HCT116 (cell line): ENCODE measurements at regions of chr5 and their contacts with region 1.

Region 1: DNA sequence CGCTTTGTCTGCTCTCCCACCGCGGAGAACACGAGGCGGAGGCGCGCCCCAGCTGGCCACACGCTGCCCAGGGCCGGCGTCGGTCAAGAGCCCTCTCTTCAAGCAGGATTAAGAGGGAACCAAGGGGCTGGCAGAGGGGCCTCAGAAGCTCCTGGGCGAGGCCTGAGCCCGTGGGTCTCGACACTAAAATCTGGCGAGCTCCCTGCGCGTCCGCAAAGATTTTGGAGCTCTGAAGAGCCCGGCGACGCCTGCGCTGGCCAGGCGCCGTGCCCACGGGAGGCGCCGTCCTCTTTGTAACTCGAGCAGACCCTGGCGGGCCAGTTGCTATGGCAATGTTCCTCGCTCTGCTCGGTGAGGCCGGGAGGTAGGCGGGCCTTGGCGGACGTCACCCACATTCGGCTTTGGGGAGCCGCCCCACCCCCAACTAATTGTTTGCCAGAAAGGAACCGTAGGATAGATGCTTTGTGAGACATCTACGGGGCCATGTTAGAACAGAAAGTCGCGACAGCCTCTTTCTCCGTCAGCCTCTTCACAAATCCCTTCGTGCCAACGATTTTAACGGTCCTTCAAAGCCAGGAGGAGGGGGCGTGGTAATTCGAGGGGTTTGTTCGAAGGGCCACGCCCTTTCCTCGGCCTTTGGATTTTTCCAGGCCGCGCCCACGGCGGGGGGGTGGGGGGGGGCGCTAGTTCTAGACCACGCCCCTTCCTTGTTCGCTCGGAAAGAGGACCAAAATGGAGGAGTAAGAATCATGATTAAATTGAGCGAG is 714 bp upstream of the CNOT8 start:
- DNase-seq: peak; percentile 92
- ATAC-seq: peak; percentile 81
- H3K4me3 ChIP-seq: peak overlapping the region; percentile 76 to 95
- H3K27ac ChIP-seq: peak overlapping the region; percentile 94
- H3K4me1 ChIP-seq: peaks cover 17 to 22% of the 10 kb centered on the region in 2 experiments
- H3K27me3 ChIP-seq: no peaks in the 10 kb centered on the region
- CTCF ChIP-seq: no peak
- POLR2A ChIP-seq: peak; percentile 68
- RAD21 ChIP-seq: no peak

Region 2: GRCh38 chr5:154683101-154683880 is 174.4 kb before region 1 on chr5:
- CTCF ChIA-PET with region 1: no interaction called
- POLR2A ChIA-PET with region 1: interaction called, 3 read pairs
- RAD21 ChIA-PET with region 1: no interaction called
- intact Hi-C with region 1: loop called (anchors 10 kb)
- DNase-seq: no peak
- ATAC-seq: peak; percentile 43
- H3K4me3 ChIP-seq: peak overlapping the region; percentile 34 to 47
- H3K27ac ChIP-seq: peak overlapping the region; percentile 78
- H3K4me1 ChIP-seq: peaks cover 16 to 27% of the 10 kb centered on the region in 2 experiments
- H3K27me3 ChIP-seq: no peaks in the 10 kb centered on the region
- CTCF ChIP-seq: no peak
- POLR2A ChIP-seq: no peak
- RAD21 ChIP-seq: no peak

Region 3: GRCh38 chr5:154754460-154755360 is 103.0 kb before region 1 on chr5:
- CTCF ChIA-PET with region 1: no interaction called
- POLR2A ChIA-PET with region 1: no interaction called
- RAD21 ChIA-PET with region 1: no interaction called
- intact Hi-C with region 1: loop called (anchors 2 kb)
- DNase-seq: peak; percentile 97
- ATAC-seq: peak; percentile 88
- H3K4me3 ChIP-seq: peak overlapping the region; percentile 90 to 92
- H3K27ac ChIP-seq: peak overlapping the region; percentile 95
- H3K4me1 ChIP-seq: peaks cover 19 to 42% of the 10 kb centered on the region in 2 experiments
- H3K27me3 ChIP-seq: no peaks in the 10 kb centered on the region
- CTCF ChIP-seq: peak in 2 of 3 experiments; percentile 22 to 32; a peak in 2 of 6 replicates
- POLR2A ChIP-seq: peak; percentile 52
- RAD21 ChIP-seq: no peak

Region 4: GRCh38 chr5:154829589-154830218 is 28.0 kb before region 1 on chr5:
- CTCF ChIA-PET with region 1: no interaction called
- POLR2A ChIA-PET with region 1: interaction called, 7 read pairs
- RAD21 ChIA-PET with region 1: no interaction called
- intact Hi-C with region 1: loop called (anchors 2 kb)
- DNase-seq: peak; percentile 85
- ATAC-seq: peak; percentile 86
- H3K4me3 ChIP-seq: peak overlapping the region in 1 of 2 experiments; percentile 33; a peak in 2 of 4 replicates
- H3K27ac ChIP-seq: peak overlapping the region; percentile 56
- H3K4me1 ChIP-seq: peaks cover 35 to 44% of the 10 kb centered on the region in 2 experiments
- H3K27me3 ChIP-seq: no peaks in the 10 kb centered on the region
- CTCF ChIP-seq: no peak
- POLR2A ChIP-seq: no peak
- RAD21 ChIP-seq: no peak; the same call in 1 of the 2 replicates

Region 5: DNA sequence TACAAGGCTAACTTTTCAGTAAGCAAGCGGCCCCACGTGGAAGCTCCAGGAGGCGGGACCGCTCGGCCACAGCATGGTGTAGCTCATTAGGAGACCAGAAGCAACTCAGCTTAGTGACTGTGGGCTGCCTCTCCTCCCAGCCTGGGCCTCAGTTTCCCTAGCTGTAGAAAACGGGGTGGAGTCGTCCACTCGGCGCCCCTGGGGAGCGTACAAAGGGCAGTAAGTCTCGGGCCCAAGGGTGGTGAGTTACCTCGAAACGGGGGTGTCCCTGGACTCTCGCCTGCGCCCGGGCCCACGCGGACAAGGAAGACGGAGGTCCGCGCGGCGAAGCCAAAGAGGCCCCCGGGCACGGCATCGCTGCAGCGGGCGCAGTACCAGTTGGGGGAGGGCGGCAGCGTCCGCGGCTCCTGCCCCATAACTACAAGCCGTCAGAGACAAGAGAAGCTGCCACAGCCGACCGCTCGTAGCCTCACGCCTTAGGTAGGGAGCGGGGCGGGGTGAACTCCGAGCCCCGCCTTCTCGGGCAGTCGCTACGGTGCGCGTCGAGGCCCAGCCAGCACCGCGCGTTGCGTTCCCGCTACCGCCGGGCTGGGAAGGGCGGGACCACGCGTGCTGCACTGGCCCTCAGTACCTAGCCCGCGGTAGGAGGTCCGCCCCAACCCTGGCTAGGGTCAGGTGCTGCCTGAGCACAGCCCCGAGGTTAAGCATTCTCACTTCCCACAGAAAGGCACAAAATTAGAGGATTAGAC is 80.2 kb after region 1 on chr5 and contains the start of gene GEMIN5:
- CTCF ChIA-PET with region 1: no interaction called
- POLR2A ChIA-PET with region 1: interaction called, 3 read pairs
- RAD21 ChIA-PET with region 1: no interaction called
- intact Hi-C with region 1: loop called (anchors 5 kb)
- DNase-seq: peak; percentile 77
- ATAC-seq: peak; percentile 89
- H3K4me3 ChIP-seq: peak within 1 kb of the TSS; percentile 92 to 98
- H3K27ac ChIP-seq: peak within 1 kb of the TSS; percentile 46
- H3K4me1 ChIP-seq: peaks cover 9 to 21% of the 10 kb centered on the region in 2 experiments
- H3K27me3 ChIP-seq: no peaks in the 10 kb centered on the region
- CTCF ChIP-seq: no peak
- POLR2A ChIP-seq: peak; percentile 64
- RAD21 ChIP-seq: no peak; the same call in 1 of the 2 replicates
- total RNA-seq, gene GEMIN5: 35.9 TPM

Region 6: DNA sequence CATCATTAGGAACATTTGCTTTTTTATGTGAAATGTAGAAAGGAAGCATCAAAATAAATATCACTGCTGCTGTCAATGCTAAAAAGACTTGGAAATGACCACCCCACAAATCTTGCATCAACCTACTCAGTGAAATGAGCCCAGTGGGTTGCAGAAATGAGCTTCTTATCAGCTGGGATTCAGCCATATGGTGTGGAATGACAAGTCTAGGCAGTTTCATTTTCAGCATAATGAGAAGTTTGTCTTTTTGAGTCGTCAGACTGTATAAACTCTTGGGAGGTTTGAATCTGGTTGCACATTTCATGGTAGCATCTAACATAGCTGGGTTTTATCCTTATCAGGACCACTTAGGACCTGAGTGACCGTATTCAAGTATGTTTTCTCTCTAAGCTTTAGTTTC is 1741.3 kb after region 1 on chr5:
- CTCF ChIA-PET with region 1: no interaction called
- POLR2A ChIA-PET with region 1: no interaction called
- RAD21 ChIA-PET with region 1: no interaction called
- intact Hi-C with region 1: no loop called
- DNase-seq: no peak
- ATAC-seq: no peak
- H3K4me3 ChIP-seq: no peak overlapping the region
- H3K27ac ChIP-seq: no peak overlapping the region
- H3K4me1 ChIP-seq: no peaks in the 10 kb centered on the region
- H3K27me3 ChIP-seq: no peaks in the 10 kb centered on the region
- CTCF ChIP-seq: no peak
- POLR2A ChIP-seq: no peak
- RAD21 ChIP-seq: no peak